Common myeloid progenitor, CD34-positive (primary cell): ENCODE measurements at regions of chr6 and their contacts with region 1.

Region 1: DNA sequence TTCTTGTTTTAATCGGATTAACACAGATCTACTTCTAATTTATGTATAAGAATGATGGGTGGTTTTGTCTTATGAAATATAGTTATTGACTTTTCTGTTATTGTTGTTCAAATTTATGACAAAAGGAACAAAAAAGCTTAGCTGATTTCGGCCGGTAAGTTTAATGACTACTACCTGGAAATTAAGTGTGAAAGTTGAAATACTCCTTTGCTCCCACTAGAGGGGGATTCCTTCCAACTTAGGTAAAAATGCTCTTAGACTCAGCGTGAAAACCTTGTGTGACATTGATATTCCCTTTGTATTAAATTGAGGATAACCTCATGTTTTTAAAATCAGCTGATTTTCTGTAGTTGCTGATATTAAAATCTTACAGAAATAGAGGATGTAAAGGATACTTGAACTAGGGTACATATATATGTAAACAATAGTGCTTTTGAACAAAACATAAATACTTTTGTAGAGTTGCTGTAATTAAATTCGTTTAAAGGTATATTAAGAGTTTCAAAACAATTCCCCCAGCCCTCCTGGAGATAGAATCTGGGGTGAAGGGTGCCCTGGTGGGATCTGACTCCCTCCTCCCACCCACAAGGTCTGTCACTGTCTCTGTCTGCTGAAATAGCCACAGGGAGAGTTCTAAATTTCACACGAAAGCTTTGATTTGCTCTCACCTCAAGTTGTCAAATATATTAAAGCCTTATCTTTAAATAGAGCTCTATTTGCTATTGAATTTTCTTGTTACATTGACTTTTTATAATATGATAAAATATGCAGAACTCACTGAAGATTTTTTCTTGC is 257.5 kb downstream of the ARID1B start:
- DNase-seq: peak; percentile 66 to 79 (median 77)
- H3K4me3 ChIP-seq: peak overlapping the region in 1 of 7 experiments; percentile 78
- H3K27ac ChIP-seq: no peak overlapping the region
- H3K4me1 ChIP-seq: peaks cover 20 to 45% (median 25%) of the 10 kb centered on the region in 4 experiments
- H3K27me3 ChIP-seq: no peaks in the 10 kb centered on the region

Region 2: GRCh38 chr6:157059781-157060180 is 25.1 kb after region 1 on chr6:
- CTCF ChIA-PET with region 1: interaction called, 10 read pairs
- POLR2A ChIA-PET with region 1: no interaction called
- DNase-seq: peak in 1 of 3 donors; percentile 45
- H3K4me3 ChIP-seq: no peak overlapping the region
- H3K27ac ChIP-seq: no peak overlapping the region
- H3K4me1 ChIP-seq: peaks cover 3 to 41% (median 28%) of the 10 kb centered on the region in 4 experiments
- H3K27me3 ChIP-seq: no peaks in the 10 kb centered on the region